Motor neuron (in vitro differentiated cells): ENCODE measurements at regions of chr11 and their contacts with region 1.

Region 1: GRCh38 chr11:95150946-95151684 is 61.5 kb downstream of the ENDOD1 start:
- ATAC-seq: peak; percentile 72 to 90 (median 86)
- H3K4me3 ChIP-seq: peak overlapping the region; percentile 15 to 28 (median 21)
- H3K27ac ChIP-seq: no peak overlapping the region
- H3K4me1 ChIP-seq: peaks cover 12 to 18% of the 10 kb centered on the region in 2 donors

Region 2: GRCh38 chr11:95705485-95706124 is 554.5 kb after region 1 on chr11:
- in situ Hi-C with region 1: loop called in 1 of 9 experiments (anchors 10 kb)
- ATAC-seq: peak; percentile 87 to 98 (median 94)
- H3K4me3 ChIP-seq: no peak overlapping the region
- H3K27ac ChIP-seq: no peak overlapping the region
- H3K4me1 ChIP-seq: peaks cover 8 to 10% of the 10 kb centered on the region in 2 donors